Activated CD4-positive, alpha-beta T cell treated with anti-CD3 and anti-CD28 coated beads for 36 hours (primary cell): ENCODE measurements at regions of chr4 and their contacts with region 1.

Region 1: DNA sequence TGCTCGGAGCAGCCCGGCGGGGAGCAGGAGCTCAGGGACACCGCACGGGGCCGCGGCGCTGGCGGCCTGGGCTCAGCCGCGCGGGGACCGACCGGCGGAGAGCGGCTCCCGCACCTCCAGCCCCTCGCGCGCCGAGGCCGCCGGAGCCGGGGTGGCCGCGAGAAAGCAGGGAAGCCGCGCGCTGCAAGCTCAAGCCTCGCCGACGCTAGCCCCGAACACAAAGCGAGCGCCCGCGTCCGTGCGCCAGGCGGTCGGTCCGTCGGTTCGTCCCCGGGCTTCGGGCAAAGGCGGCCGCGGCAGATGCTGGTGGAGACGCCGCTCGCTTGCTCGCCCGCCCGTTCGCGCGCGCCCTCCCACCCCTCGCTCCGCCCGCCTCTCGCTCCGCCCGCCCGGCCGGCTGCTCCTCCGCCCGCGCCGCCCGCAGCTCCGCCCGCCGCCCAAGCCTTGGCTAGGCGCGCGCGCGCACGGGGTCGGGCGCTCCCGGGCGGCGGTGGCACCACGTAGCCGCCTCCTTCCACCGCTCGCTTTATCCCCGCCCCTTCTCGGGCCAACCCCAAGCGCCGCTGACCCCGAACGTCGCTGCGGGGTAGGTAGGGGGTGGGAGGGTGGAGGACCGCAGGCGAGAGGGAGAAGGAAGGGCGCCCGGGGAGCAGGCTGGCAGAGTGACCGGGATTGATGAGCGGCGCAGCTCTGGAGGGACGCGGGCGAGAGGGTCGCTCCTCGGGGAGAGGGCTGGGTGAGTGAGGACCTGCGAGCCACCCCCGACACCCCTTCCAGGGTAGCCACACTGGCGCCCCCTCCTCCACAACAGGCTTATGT is at the start of gene TSPAN5:
- DNase-seq: peak; percentile 91
- ATAC-seq: peak; percentile 62
- H3K4me3 Mint-ChIP-seq: peak within 1 kb of the TSS; percentile 89
- H3K27ac Mint-ChIP-seq: peak within 1 kb of the TSS; percentile 94
- H3K4me1 Mint-ChIP-seq: peaks cover 78% of the 10 kb centered on the region
- H3K27me3 Mint-ChIP-seq: no peaks in the 10 kb centered on the region
- total RNA-seq, gene TSPAN5: 18.4 to 23.6 TPM

Region 2: GRCh38 chr4:98467627-98468072 is 190.8 kb before region 1 on chr4:
- CTCF ChIA-PET with region 1: interaction called, 5 read pairs
- POLR2A ChIA-PET with region 1: no interaction called
- intact Hi-C with region 1: loop called (anchors 5 kb)
- DNase-seq: peak; percentile 85
- ATAC-seq: peak; percentile 95
- H3K4me3 Mint-ChIP-seq: peak overlapping the region; percentile 52
- H3K27ac Mint-ChIP-seq: peak overlapping the region; percentile 37
- H3K4me1 Mint-ChIP-seq: peaks cover 23% of the 10 kb centered on the region
- H3K27me3 Mint-ChIP-seq: no peaks in the 10 kb centered on the region

Region 3: GRCh38 chr4:98601708-98602107 is 56.8 kb before region 1 on chr4:
- CTCF ChIA-PET with region 1: interaction called, 6 read pairs
- POLR2A ChIA-PET with region 1: interaction called, 7 read pairs
- intact Hi-C with region 1: loop called (anchors 1 kb)
- DNase-seq: peak; percentile 58
- ATAC-seq: peak; percentile 77
- H3K4me3 Mint-ChIP-seq: peak overlapping the region; percentile 41
- H3K27ac Mint-ChIP-seq: peak overlapping the region; percentile 92
- H3K4me1 Mint-ChIP-seq: peaks cover 52% of the 10 kb centered on the region
- H3K27me3 Mint-ChIP-seq: no peaks in the 10 kb centered on the region

Region 4: GRCh38 chr4:98706200-98706813 is 47.8 kb after region 1 on chr4:
- CTCF ChIA-PET with region 1: no interaction called
- POLR2A ChIA-PET with region 1: no interaction called
- intact Hi-C with region 1: loop called (anchors 1 kb)
- DNase-seq: no peak
- ATAC-seq: peak; percentile 89
- H3K4me3 Mint-ChIP-seq: peak overlapping the region; percentile 11
- H3K27ac Mint-ChIP-seq: peak overlapping the region; percentile 74
- H3K4me1 Mint-ChIP-seq: peaks cover 26% of the 10 kb centered on the region
- H3K27me3 Mint-ChIP-seq: no peaks in the 10 kb centered on the region

Region 5: DNA sequence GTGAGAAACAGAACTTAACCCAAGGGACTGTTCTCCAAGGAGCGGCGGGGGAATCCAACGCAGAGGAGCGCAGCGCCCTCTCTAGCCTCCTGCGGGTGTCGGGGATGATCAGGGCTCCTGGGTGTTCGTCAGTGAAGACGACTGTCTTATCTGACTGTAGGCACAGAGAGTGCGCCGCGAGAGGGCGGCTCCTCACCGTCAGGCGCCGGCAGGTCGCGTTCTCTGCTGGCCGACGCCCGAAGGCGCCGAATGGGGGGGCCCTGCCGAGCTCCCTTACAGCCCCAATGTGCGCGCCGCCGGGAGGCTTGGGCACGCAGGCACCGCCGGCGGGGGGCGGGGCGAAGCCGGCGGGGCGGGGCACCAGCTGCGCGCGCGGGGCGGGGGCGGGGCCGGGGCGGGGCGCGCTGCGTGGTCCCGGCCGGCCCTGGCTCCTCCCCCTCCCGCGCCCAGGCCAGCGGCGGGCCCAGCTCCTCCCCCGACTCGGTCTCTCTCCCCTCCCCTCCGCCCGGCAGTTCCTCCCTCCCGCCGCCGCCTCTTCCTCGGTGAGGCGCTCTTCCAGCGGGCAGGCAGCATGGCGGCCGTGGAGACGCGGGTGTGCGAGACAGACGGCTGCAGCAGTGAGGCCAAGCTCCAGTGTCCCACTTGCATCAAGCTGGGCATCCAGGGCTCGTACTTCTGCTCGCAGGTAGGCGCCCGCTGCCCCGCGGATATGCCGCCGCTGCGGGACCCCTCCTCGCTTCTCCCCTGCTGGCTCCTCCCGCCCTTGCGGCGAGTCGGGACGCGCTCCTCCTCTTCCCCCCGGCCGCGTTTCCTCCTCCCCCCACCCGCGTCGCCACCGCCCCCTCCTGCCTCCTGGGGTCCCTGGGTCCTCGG is 336.9 kb after region 1 on chr4 and contains the start of gene METAP1:
- CTCF ChIA-PET with region 1: no interaction called
- POLR2A ChIA-PET with region 1: interaction called, 3 read pairs
- intact Hi-C with region 1: loop called (anchors 2 to 5 kb)
- DNase-seq: peak; percentile 98
- ATAC-seq: peak; percentile 91
- H3K4me3 Mint-ChIP-seq: peak within 1 kb of the TSS; percentile 81
- H3K27ac Mint-ChIP-seq: peak within 1 kb of the TSS; percentile 95
- H3K4me1 Mint-ChIP-seq: peaks cover 40% of the 10 kb centered on the region
- H3K27me3 Mint-ChIP-seq: no peaks in the 10 kb centered on the region
- total RNA-seq, gene METAP1: 67.9 to 75.2 TPM

Region 6: GRCh38 chr4:99949034-99949998 is 1290.8 kb after region 1 on chr4:
- CTCF ChIA-PET with region 1: no interaction called
- POLR2A ChIA-PET with region 1: no interaction called
- intact Hi-C with region 1: loop called in 1 of 2 experiments (anchors 5 kb)
- DNase-seq: peak; percentile 96
- ATAC-seq: peak; percentile 52
- H3K4me3 Mint-ChIP-seq: no peak overlapping the region
- H3K27ac Mint-ChIP-seq: no peak overlapping the region
- H3K4me1 Mint-ChIP-seq: peaks cover 33% of the 10 kb centered on the region
- H3K27me3 Mint-ChIP-seq: no peaks in the 10 kb centered on the region